A673 (cell line): ENCODE measurements at regions of chr5 and their contacts with region 1.

Region 1: GRCh38 chr5:132007399-132008165 is 3.9 kb downstream of the ACSL6 start:
- DNase-seq: peak; percentile 77
- H3K4me3 ChIP-seq: no peak overlapping the region
- H3K27ac ChIP-seq: no peak overlapping the region
- H3K4me1 ChIP-seq: no peaks in the 10 kb centered on the region
- H3K27me3 ChIP-seq: peaks cover 22% of the 10 kb centered on the region
- CTCF ChIP-seq: peak; percentile 71

Region 2: DNA sequence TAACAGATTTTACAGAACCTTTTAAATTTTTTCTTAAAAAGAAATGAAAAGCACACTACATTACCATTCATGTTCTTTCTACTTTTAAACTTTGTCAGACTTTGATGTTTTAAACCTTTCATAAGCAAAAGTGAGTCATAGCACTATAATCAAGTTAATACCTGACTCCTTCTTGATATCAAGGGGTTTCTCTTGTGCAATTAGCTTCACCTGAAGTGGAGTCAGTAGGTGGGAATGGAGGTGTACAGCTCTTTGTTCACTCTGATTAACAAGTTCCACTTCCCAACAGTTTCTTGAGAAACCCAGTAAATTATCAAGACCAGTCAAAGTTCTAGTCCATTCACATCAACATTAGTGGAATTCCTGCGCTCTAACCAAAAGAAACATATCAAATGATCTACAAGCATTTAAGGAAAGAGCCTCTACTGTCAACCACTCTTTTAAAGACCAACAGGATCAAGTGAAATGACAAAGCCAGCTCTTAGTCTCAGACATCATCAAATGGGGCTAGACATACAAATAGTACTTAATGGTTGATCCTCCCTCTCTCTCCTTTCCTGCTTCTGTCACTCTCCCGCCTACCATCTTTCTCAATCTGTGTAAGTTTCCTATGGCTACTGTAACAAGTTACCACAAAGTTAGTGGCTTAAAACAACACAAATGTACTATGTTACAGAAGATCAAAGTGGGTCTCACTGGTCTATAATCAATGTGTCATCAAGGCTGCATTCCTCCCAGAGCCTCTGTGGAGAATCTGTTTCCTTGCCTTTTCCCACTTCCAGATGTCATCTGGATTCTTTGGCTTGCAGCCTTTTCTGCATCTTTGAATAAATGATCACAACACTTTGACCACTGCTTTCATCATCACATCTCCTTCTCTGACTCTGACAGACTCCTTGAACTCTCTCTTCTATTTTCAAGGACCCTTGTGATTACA is 910.5 kb before region 1 on chr5:
- CTCF ChIA-PET with region 1: no interaction called
- POLR2A ChIA-PET with region 1: no interaction called
- intact Hi-C with region 1: no loop called
- DNase-seq: no peak
- H3K4me3 ChIP-seq: no peak overlapping the region
- H3K27ac ChIP-seq: no peak overlapping the region
- H3K4me1 ChIP-seq: no peaks in the 10 kb centered on the region
- H3K27me3 ChIP-seq: peaks cover 53% of the 10 kb centered on the region
- CTCF ChIP-seq: no peak

Region 3: DNA sequence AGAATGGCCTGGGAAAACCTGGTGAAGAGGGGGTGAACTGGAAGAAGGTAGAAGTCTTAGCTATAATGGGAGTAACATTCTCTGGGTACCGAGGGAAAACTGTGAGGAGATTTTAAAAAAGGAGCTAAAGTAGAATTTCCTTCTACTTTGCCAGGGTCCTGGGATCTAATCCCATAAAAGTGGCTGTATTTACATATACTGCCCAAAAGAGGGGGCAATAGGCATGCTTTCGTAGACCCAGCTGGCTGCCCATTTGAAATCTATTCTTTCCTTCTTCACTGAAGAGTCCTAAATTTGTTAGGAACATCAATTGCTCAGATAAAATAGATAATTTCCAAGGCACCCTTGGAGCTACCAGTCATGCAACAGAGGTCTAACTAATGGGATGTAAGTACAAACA is 584.5 kb before region 1 on chr5:
- CTCF ChIA-PET with region 1: interaction called, 13 read pairs
- POLR2A ChIA-PET with region 1: no interaction called
- intact Hi-C with region 1: loop called (anchors 1 kb)
- DNase-seq: peak; percentile 44
- H3K4me3 ChIP-seq: no peak overlapping the region
- H3K27ac ChIP-seq: no peak overlapping the region
- H3K4me1 ChIP-seq: no peaks in the 10 kb centered on the region
- H3K27me3 ChIP-seq: no peaks in the 10 kb centered on the region
- CTCF ChIP-seq: peak; percentile 73

Region 4: GRCh38 chr5:131589510-131590348 is 417.9 kb before region 1 on chr5:
- CTCF ChIA-PET with region 1: interaction called, 27 read pairs
- POLR2A ChIA-PET with region 1: no interaction called
- intact Hi-C with region 1: loop called (anchors 1 kb)
- DNase-seq: peak; percentile 61
- H3K4me3 ChIP-seq: no peak overlapping the region
- H3K27ac ChIP-seq: no peak overlapping the region
- H3K4me1 ChIP-seq: no peaks in the 10 kb centered on the region
- H3K27me3 ChIP-seq: no peaks in the 10 kb centered on the region
- CTCF ChIP-seq: peak; percentile 82

Region 5: DNA sequence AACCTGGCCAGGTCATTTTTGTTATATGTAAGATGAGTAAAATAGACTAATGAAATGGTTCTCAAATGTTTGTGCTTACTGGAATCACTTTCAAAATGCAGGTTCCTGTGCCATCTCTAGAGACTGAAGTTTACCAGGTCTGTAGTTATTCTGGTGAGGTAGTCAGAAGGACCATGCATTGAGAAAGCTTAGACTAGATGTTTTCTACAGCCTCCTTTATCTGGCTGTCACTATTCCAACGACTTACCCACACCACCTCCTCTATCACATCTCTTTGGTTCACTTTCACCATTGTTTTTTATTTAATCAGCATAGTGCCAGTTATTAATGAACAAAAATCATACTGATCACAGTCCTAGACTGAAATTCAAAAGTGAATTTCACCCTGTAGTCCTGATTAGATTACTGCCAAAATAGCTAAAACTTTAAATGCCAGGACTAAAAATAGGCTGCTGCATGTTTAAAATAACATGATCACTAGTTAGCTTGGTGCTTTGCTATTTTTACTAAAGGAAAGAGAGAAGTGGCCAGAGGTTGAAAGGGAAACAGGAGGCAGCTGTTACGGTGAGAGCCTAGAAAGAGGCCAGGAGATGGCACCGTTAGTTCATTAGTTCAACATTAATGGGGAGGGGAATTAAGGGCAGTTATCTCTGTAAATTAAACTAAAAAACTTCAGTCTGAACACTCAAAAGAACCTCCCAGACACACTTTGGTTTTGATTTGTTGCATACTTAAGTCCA is 196.9 kb before region 1 on chr5:
- CTCF ChIA-PET with region 1: interaction called, 5 read pairs
- POLR2A ChIA-PET with region 1: no interaction called
- intact Hi-C with region 1: loop called (anchors 2 kb)
- DNase-seq: peak; percentile 8
- H3K4me3 ChIP-seq: no peak overlapping the region
- H3K27ac ChIP-seq: no peak overlapping the region
- H3K4me1 ChIP-seq: no peaks in the 10 kb centered on the region
- H3K27me3 ChIP-seq: no peaks in the 10 kb centered on the region
- CTCF ChIP-seq: 0 out of 2 replicates have a peak, but pooled peaks have one; percentile 12